ENCODE measurements at regions of chr4 and their contacts with region 1.

Region 1: DNA sequence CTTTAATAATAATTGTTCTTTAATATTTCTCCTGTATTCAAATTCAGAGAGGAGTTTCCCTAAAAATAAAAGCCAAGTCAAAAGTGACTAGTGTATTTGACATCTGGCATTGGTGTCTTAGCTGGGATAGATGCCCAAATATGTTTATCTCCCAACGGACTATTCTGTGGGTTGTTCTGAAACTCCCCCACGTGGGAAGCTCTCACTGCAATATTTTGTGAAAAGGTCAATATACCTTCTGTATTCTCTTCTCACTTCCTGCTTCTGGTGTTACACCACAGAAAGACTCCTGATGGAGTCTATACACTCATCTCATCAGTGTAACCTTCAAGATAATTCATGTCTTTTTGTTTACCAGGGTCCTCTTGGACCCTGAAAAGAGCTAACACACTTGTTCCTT is 2052.8 kb upstream of the TENM3 start:
- DNase-seq: no peak
- ATAC-seq: no peak
- H3K4me3 Mint-ChIP-seq: no peak overlapping the region
- H3K27ac Mint-ChIP-seq: no peak overlapping the region
- H3K4me1 Mint-ChIP-seq: no peaks in the 10 kb centered on the region
- H3K27me3 Mint-ChIP-seq: no peaks in the 10 kb centered on the region

Region 2: DNA sequence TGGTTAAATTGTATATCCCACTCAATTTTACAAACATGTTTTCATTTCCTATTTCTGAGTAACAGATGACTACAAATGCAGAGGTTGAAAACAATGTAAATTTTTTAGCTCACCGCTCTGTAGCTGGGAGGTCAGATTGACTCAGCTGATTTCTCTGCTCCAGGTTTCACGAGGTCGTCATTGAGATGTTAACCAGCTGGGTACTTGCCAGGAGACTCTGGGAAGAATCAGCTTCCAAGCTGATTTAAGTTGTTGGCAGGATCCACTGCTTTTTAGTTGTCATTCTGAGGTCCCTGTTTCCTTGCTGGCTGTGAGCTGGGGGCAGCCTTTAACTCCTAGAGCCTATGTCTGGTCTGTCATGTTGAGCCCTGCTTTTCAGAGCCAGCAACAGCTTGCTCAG is 1883.8 kb before region 1 on chr4:
- CTCF ChIA-PET with region 1: no interaction called
- POLR2A ChIA-PET with region 1: no interaction called
- intact Hi-C with region 1: loop called in 1 of 2 experiments (anchors 10 kb)
- DNase-seq: no peak
- ATAC-seq: no peak
- H3K4me3 Mint-ChIP-seq: no peak overlapping the region
- H3K27ac Mint-ChIP-seq: no peak overlapping the region
- H3K4me1 Mint-ChIP-seq: no peaks in the 10 kb centered on the region
- H3K27me3 Mint-ChIP-seq: no peaks in the 10 kb centered on the region

Measured in activated CD4-positive, alpha-beta T cell treated with anti-CD3 and anti-CD28 coated beads for 36 hours (primary cell).